HEK293 (cell line): ENCODE measurements at regions of chr10 and their contacts with region 1.

Region 1: DNA sequence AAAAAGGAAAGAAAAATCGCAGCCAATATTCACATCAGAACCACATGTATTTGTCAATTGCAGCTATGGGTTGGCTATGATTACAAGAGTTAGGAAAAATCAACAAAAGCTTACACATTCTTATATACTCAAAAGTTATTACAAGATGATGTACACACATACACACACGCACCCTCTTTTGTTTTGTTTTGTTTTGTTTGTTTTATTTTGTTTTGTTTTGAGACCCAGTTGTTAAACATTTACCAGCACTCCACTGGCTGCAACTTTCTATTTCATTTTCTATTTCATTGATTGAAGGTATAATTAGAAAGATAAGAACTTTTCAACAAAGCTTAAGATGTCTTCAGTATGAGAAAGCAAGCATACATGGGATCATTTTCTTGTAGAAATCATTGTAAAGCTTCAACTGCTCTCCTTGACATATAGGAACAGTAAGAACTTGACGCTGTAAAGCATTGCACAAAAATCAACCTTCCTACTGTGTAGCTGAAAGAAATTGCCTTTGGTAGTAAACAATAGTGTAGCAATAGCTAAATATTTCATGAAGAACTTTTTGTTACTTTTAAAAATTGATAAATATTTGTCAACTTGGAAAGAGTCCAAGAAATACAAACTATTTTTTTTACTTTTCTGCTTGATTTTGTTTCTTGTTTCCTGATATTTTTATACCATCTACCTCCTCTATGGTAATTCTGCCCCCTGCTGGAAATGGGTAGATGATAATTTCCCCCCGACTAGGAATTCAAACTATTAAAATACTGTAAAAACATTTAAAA is 205.9 kb downstream of the MBL2 start:
- H3K4me3 ChIP-seq: no peak overlapping the region
- H3K27ac ChIP-seq: no peak overlapping the region
- H3K4me1 ChIP-seq: no peaks in the 10 kb centered on the region
- CTCF ChIP-seq: no peak

Region 2: GRCh38 chr10:52308251-52309031 is 258.2 kb before region 1 on chr10:
- CTCF ChIA-PET with region 1: interaction called, 56 read pairs
- POLR2A ChIA-PET with region 1: no interaction called
- H3K4me3 ChIP-seq: peak overlapping the region; percentile 22; the same call in 1 of the 2 replicates
- H3K27ac ChIP-seq: no peak overlapping the region
- H3K4me1 ChIP-seq: no peaks in the 10 kb centered on the region
- CTCF ChIP-seq: peak; percentile 44